ENCODE measurements at regions of chrX and their contacts with region 1.

Region 1: GRCh38 chrX:136909706-136910564 is 29.4 kb upstream of the RBMX start:
- DNase-seq: peak; percentile 75
- ATAC-seq: peak; percentile 69
- H3K4me3 ChIP-seq: peak overlapping the region; percentile 71 to 84 (median 80)
- H3K4me3 Mint-ChIP-seq: peak overlapping the region; percentile 95
- H3K27ac ChIP-seq: peak overlapping the region; percentile 75 to 91
- H3K27ac Mint-ChIP-seq: peak overlapping the region; percentile 92
- H3K4me1 ChIP-seq: peaks cover 4 to 5% of the 10 kb centered on the region in 2 donors
- H3K4me1 Mint-ChIP-seq: peaks cover 7% of the 10 kb centered on the region
- H3K27me3 ChIP-seq: no peaks in the 10 kb centered on the region
- H3K27me3 Mint-ChIP-seq: no peaks in the 10 kb centered on the region
- CTCF ChIP-seq: no peak

Region 2: DNA sequence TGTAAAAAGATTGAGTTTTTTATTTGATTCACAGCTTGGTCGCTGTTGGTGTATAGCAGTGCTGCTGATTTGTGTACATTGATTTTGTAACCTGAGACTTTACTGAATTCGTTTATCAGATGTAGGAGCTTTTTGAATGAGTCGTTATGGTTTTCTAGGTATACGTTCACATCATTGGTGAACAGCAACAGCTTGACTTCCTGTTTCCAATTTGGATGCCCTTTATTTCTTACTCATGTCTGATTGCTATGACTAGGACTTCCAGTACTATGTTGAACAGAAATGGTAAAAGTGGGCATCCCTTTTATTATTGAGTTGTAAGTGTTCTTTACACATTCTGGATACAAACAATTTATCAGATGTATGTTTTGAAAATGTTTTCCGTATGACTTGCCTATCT is 533.2 kb before region 1 on chrX:
- CTCF ChIA-PET with region 1: no interaction called
- POLR2A ChIA-PET with region 1: no interaction called
- intact Hi-C with region 1: no loop called
- DNase-seq: no peak
- ATAC-seq: no peak
- H3K4me3 ChIP-seq: no peak overlapping the region
- H3K4me3 Mint-ChIP-seq: no peak overlapping the region
- H3K27ac ChIP-seq: no peak overlapping the region
- H3K27ac Mint-ChIP-seq: no peak overlapping the region
- H3K4me1 ChIP-seq: no peaks in the 10 kb centered on the region
- H3K4me1 Mint-ChIP-seq: no peaks in the 10 kb centered on the region
- H3K27me3 ChIP-seq: peaks cover 0 to 2% (median 0%) of the 10 kb centered on the region in 4 experiments
- H3K27me3 Mint-ChIP-seq: no peaks in the 10 kb centered on the region
- CTCF ChIP-seq: no peak

Region 3: DNA sequence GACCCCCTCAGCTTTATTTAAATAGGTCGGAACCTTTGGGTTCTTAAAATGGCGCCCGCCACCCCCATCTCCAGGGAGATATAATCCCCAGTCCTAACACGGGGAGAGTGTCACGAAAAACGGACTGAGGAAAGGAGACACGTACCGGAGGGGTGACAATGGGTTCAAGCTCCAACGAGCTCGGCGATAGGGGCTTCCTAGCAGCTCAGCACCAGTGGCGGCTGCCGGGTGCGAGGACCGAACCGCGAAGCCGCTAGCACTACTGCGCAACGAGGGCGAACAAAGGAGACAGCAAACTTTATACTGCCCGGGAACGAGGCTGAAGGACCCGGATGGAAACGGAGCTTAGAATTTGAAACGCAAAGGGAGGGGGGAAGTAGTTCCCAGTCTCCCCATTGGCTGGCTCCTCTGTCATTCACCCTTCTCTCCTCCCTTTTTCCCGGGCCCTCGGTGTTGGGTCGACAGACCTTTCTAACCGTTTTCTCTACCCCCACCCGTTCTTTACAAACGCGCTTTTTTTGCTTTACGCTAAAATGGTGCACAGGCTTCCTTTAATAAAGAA is 29.4 kb before region 1 on chrX and contains the start of gene RBMX:
- CTCF ChIA-PET with region 1: interaction called, 6 read pairs
- POLR2A ChIA-PET with region 1: interaction called, 12 read pairs
- intact Hi-C with region 1: loop called (anchors 1 kb)
- DNase-seq: peak; percentile 94
- ATAC-seq: peak; percentile 86
- H3K4me3 ChIP-seq: peak within 1 kb of the TSS; percentile 67 to 97 (median 87)
- H3K4me3 Mint-ChIP-seq: peak within 1 kb of the TSS; percentile 98
- H3K27ac ChIP-seq: peak within 1 kb of the TSS; percentile 96
- H3K27ac Mint-ChIP-seq: peak within 1 kb of the TSS; percentile 100
- H3K4me1 ChIP-seq: peaks cover 0 to 8% of the 10 kb centered on the region in 2 donors
- H3K4me1 Mint-ChIP-seq: peaks cover 9% of the 10 kb centered on the region
- H3K27me3 ChIP-seq: no peaks in the 10 kb centered on the region
- H3K27me3 Mint-ChIP-seq: no peaks in the 10 kb centered on the region
- CTCF ChIP-seq: no peak
- total RNA-seq, gene RBMX: 231 and 239 TPM in 2 replicates

Region 4: DNA sequence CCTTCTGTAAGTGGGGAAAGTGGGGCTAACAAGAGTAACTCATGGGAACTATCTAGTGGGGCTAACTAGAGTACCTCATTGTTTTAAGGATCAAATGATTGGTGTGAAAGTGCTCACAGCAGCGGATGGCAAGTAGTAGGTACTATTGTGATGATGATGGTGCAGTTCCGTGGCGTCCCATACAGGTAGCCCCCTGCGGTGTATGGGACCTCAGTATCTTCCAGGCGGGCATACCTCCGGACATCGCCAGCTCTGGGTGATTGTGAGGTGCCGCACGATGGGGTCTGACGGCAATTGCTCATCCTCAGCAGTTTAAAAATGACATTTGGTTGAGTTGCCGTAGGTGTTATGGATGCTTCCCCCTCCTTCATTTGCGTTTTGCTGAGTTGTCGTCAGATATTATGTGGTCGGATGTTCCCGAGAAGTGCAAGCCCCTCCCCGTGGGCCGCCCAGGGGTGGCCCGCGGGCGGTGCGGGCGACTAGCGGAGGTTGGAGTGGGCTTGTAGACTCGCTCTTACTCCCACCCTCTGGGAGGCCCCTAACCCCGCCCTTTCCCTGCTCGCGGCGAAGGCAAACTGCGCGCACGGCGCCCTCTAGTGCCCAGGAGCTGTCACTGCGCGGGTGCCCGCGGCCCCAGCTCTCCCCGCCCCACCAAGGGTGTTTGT is 142.2 kb after region 1 on chrX:
- CTCF ChIA-PET with region 1: no interaction called
- POLR2A ChIA-PET with region 1: no interaction called
- intact Hi-C with region 1: no loop called
- DNase-seq: peak; percentile 77
- ATAC-seq: peak; percentile 95
- H3K4me3 ChIP-seq: peak overlapping the region; percentile 34 to 54 (median 48)
- H3K4me3 Mint-ChIP-seq: peak overlapping the region; percentile 93
- H3K27ac ChIP-seq: no peak overlapping the region
- H3K27ac Mint-ChIP-seq: no peak overlapping the region
- H3K4me1 ChIP-seq: peaks cover 6 to 14% of the 10 kb centered on the region in 2 donors
- H3K4me1 Mint-ChIP-seq: peaks cover 16% of the 10 kb centered on the region
- H3K27me3 ChIP-seq: peaks cover 0 to 32% (median 15%) of the 10 kb centered on the region in 4 experiments
- H3K27me3 Mint-ChIP-seq: peaks cover 41% of the 10 kb centered on the region
- CTCF ChIP-seq: peak; percentile 76